Endothelial cell of umbilical vein (primary cell): ENCODE measurements at regions of chr2 and their contacts with region 1.

Region 1: DNA sequence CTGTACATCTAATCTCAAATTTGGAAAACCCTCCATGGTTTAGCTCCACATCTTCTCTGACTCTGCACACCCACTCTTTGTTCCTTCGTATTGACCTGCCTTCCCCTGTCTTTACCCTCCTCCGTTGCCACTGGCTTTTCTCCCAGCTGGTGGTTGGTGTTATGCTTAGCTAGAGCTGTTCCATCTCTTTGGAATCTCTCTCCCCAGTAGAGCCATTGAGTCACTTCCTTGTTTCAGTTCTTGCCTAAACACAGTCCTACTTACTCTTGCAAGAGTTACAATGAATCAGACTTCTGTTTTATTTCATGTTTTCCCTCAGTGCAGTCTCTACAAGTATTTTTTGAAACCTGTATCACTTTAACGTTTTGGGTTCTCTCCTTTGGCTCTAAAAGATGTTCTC is 263.9 kb downstream of the LTBP1 start:
- DNase-seq: peak; percentile 94
- H3K4me3 ChIP-seq: no peak overlapping the region
- H3K27ac ChIP-seq: peak overlapping the region; percentile 97
- H3K4me1 ChIP-seq: peaks cover 64% of the 10 kb centered on the region
- H3K27me3 ChIP-seq: no peaks in the 10 kb centered on the region
- CTCF ChIP-seq: no peak
- POLR2A ChIP-seq: peak; percentile 43

Region 2: GRCh38 chr2:33069894-33070651 is 140.6 kb before region 1 on chr2:
- CTCF ChIA-PET with region 1: no interaction called
- POLR2A ChIA-PET with region 1: no interaction called
- dilution Hi-C with region 1: no loop called
- intact Hi-C with region 1: loop called (anchors 1 kb)
- DNase-seq: peak; percentile 98
- H3K4me3 ChIP-seq: no peak overlapping the region
- H3K27ac ChIP-seq: peak overlapping the region; percentile 98
- H3K4me1 ChIP-seq: peaks cover 60% of the 10 kb centered on the region
- H3K27me3 ChIP-seq: no peaks in the 10 kb centered on the region
- CTCF ChIP-seq: no peak
- POLR2A ChIP-seq: no peak

Region 3: GRCh38 chr2:33166287-33166881 is 44.2 kb before region 1 on chr2:
- CTCF ChIA-PET with region 1: no interaction called
- POLR2A ChIA-PET with region 1: no interaction called
- dilution Hi-C with region 1: no loop called
- intact Hi-C with region 1: loop called (anchors 5 kb)
- DNase-seq: peak; percentile 66
- H3K4me3 ChIP-seq: peak overlapping the region in 1 of 3 experiments; percentile 17
- H3K27ac ChIP-seq: peak overlapping the region; percentile 28
- H3K4me1 ChIP-seq: peaks cover 16% of the 10 kb centered on the region
- H3K27me3 ChIP-seq: no peaks in the 10 kb centered on the region
- CTCF ChIP-seq: no peak
- POLR2A ChIP-seq: no peak

Region 4: GRCh38 chr2:33258387-33258786 is 47.8 kb after region 1 on chr2:
- CTCF ChIA-PET with region 1: no interaction called
- POLR2A ChIA-PET with region 1: no interaction called
- dilution Hi-C with region 1: no loop called
- intact Hi-C with region 1: no loop called
- DNase-seq: no peak
- H3K4me3 ChIP-seq: no peak overlapping the region
- H3K27ac ChIP-seq: no peak overlapping the region
- H3K4me1 ChIP-seq: no peaks in the 10 kb centered on the region
- H3K27me3 ChIP-seq: no peaks in the 10 kb centered on the region
- CTCF ChIP-seq: no peak
- POLR2A ChIP-seq: no peak

Region 5: GRCh38 chr2:33275689-33276444 is 65.2 kb after region 1 on chr2:
- CTCF ChIA-PET with region 1: interaction called, 3 read pairs
- POLR2A ChIA-PET with region 1: no interaction called
- dilution Hi-C with region 1: no loop called
- intact Hi-C with region 1: loop called (anchors 5 kb)
- DNase-seq: peak; percentile 80
- H3K4me3 ChIP-seq: no peak overlapping the region
- H3K27ac ChIP-seq: peak overlapping the region; percentile 84
- H3K4me1 ChIP-seq: peaks cover 6% of the 10 kb centered on the region
- H3K27me3 ChIP-seq: no peaks in the 10 kb centered on the region
- CTCF ChIP-seq: no peak
- POLR2A ChIP-seq: no peak

Region 6: DNA sequence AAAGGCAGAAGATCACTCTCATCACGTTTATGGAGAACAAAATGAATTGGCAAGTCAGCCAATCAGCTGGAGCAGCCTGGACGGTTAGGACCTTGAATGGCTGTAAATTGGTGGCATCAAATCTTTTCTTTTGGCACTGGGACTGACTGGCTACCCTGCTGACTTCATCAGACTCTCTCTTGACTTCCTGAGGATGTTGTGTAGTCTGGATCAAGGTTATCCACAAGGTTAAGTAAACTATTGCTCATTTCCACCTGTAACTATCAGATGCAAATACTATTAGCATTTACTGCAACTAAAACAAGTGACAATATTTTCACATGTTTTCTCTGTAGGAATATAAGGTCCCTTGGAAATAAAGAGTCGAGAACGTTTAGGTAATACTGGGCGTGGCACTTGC is 131.5 kb after region 1 on chr2:
- CTCF ChIA-PET with region 1: no interaction called
- POLR2A ChIA-PET with region 1: no interaction called
- dilution Hi-C with region 1: no loop called
- intact Hi-C with region 1: loop called (anchors 1 kb)
- DNase-seq: peak; percentile 98
- H3K4me3 ChIP-seq: no peak overlapping the region
- H3K27ac ChIP-seq: peak overlapping the region; percentile 99
- H3K4me1 ChIP-seq: peaks cover 28% of the 10 kb centered on the region
- H3K27me3 ChIP-seq: no peaks in the 10 kb centered on the region
- CTCF ChIP-seq: no peak
- POLR2A ChIP-seq: peak; percentile 40